Transverse colon (tissue), 4 donors: ENCODE measurements at regions of chr2 and their contacts with region 1.

Region 1: DNA sequence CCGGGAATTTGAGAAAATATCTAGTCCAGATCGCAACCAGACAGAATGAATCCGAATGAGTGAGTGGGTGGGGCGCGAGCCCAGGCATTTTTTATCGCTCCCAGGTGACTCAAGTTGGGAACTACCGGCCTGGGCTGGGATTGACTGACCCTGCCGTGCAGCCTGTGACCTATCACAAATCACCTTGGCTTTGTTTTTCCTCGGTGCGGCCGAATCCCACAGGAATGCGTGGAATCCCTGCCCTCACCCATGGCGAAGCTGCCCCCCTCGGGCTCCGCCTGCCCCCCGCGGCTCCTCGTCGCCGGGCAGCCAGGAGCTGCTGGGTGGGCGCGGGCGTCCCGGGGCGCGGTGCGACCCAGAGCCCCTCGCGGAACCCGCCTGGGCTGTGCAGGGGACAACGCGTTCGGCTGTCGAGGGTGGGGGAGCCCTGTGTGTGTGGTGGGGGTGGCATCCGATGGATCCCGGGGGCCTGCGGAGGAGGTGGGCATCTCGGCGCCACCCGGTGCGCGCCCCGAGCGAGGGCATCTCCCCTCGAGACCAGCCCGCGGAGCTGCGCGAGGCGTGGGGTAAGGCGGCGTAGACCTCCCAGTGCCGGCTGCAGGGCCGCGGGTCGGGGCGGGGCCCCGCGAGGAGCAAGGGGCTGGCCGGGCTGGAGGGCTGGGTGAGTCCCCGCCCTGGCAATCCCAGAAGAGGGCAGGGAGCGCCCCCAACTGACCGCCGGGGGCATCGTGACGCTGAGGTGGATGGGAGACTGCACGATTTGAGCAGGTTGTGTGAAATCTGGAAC is 16.5 kb downstream of the B3GNT7 start:
- DNase-seq: peak; percentile 94
- H3K4me3 ChIP-seq: peak overlapping the region; percentile 43 to 61 (median 48)
- H3K27ac ChIP-seq: peak overlapping the region; percentile 80 to 84 (median 82)
- H3K4me1 ChIP-seq: peaks cover 6 to 46% (median 28%) of the 10 kb centered on the region in 4 donors
- H3K27me3 ChIP-seq: no peaks in the 10 kb centered on the region
- CTCF ChIP-seq: peak; percentile 75 to 88 (median 85)
- EP300 ChIP-seq: no peak
- POLR2A ChIP-seq: peak; percentile 50

Region 2: GRCh38 chr2:231227309-231228162 is 184.5 kb before region 1 on chr2:
- in situ Hi-C with region 1: loop called in 2 of 4 experiments (anchors 10 to 25 kb)
- intact Hi-C with region 1: loop called (anchors 5 kb)
- DNase-seq: peak; percentile 67
- H3K4me3 ChIP-seq: no peak overlapping the region
- H3K27ac ChIP-seq: peak overlapping the region; percentile 49 to 84 (median 64)
- H3K4me1 ChIP-seq: peaks cover 9 to 36% (median 20%) of the 10 kb centered on the region in 4 donors
- H3K27me3 ChIP-seq: no peaks in the 10 kb centered on the region
- CTCF ChIP-seq: peak; percentile 73 to 90 (median 76)
- EP300 ChIP-seq: no peak
- POLR2A ChIP-seq: no peak

Region 3: GRCh38 chr2:231238689-231239088 is 173.3 kb before region 1 on chr2:
- in situ Hi-C with region 1: loop called in 2 of 4 experiments (anchors 5 to 25 kb)
- intact Hi-C with region 1: no loop called
- DNase-seq: no peak
- H3K4me3 ChIP-seq: no peak overlapping the region
- H3K27ac ChIP-seq: no peak overlapping the region
- H3K4me1 ChIP-seq: peaks cover 0 to 24% (median 6%) of the 10 kb centered on the region in 4 donors
- H3K27me3 ChIP-seq: no peaks in the 10 kb centered on the region
- CTCF ChIP-seq: no peak
- EP300 ChIP-seq: no peak
- POLR2A ChIP-seq: no peak